Transverse colon (tissue), 4 donors: ENCODE measurements at regions of chr11 and their contacts with region 1.

Region 1: DNA sequence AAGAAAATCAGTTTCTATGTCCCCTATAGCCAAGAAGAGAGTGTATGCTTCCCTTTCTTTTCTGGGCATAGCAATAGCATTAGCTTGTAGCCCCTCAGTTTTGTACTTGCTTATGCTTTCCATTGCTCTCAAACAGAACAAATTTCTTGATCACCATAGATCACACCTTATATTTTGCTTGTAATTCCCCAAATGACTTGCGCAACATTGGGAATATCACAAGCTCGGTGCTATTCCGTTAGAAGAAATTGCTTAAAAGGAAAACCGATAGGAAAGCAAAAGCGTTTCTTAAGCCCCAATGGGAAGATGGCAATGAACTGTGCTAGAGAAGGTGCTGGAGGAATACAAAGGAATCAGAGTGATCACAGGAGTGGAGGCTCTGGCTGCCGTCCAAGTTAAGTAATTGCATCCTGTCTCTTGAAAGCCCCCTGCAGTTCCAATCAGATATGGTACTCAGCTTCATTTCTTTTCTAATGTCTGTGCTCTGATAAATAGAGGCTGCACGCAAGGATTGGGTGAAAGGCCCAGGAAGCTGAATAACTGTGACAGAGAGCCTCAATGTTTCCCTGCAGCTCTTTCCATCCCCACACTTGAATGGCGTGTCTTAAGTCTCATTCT is 182.1 kb upstream of the KIRREL3 start:
- DNase-seq: no peak
- H3K4me3 ChIP-seq: no peak overlapping the region
- H3K27ac ChIP-seq: no peak overlapping the region
- H3K4me1 ChIP-seq: no peaks in the 10 kb centered on the region
- H3K27me3 ChIP-seq: no peaks in the 10 kb centered on the region
- CTCF ChIP-seq: no peak
- EP300 ChIP-seq: no peak
- POLR2A ChIP-seq: no peak

Region 2: DNA sequence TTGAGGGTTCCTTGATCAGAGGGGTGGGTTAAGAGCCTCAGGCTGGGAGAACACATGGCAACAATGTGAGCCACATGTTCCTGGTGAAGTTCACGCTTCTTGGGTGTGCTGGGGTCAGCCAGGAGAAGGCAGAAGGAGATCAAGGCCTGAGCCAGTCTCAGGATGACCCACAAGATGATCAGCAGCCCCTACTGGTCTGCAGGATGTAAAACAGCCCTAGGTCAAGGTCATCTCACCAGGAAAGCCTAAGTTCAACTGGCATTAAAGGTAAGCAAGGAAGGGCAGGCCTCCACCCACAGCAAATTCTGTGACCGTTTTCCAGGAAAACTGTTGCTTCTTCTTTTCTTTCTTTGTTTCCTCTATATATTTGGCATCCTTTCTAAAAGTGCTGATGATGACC is 25.5 kb before region 1 on chr11:
- in situ Hi-C with region 1: no loop called
- intact Hi-C with region 1: loop called (anchors 1 kb)
- DNase-seq: no peak
- H3K4me3 ChIP-seq: no peak overlapping the region
- H3K27ac ChIP-seq: no peak overlapping the region
- H3K4me1 ChIP-seq: no peaks in the 10 kb centered on the region
- H3K27me3 ChIP-seq: no peaks in the 10 kb centered on the region
- CTCF ChIP-seq: no peak
- EP300 ChIP-seq: no peak
- POLR2A ChIP-seq: no peak

Region 3: DNA sequence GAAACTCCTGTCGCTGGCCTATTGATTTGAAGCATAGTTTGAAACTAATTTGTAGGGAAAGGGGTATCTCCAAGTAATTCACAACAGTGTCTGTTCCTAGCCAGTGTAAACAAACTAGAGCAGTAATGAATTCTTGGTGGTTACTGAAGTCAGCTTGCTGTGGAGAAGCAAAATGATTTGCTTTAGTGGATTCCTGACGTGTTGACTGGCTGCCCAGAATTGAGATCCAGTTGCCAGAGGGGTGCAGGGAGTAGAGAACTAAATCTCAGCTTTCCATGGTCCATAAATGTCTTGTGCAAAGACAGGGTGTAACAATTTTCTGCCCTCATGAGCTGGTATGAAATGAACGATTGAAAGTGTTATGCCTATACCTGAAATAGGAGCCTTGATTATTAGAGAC is 200.3 kb after region 1 on chr11:
- in situ Hi-C with region 1: no loop called
- intact Hi-C with region 1: no loop called
- DNase-seq: no peak
- H3K4me3 ChIP-seq: no peak overlapping the region
- H3K27ac ChIP-seq: no peak overlapping the region
- H3K4me1 ChIP-seq: peaks cover 0 to 3% (median 1%) of the 10 kb centered on the region in 4 donors
- H3K27me3 ChIP-seq: no peaks in the 10 kb centered on the region
- CTCF ChIP-seq: no peak
- EP300 ChIP-seq: no peak
- POLR2A ChIP-seq: no peak